ENCODE measurements at regions of chr10 and their contacts with region 1.

Region 1: GRCh38 chr10:73096449-73097304 is at the start of gene P4HA1:
- DNase-seq: peak; percentile 93 to 100 (median 97)
- ATAC-seq: peak; percentile 84
- H3K4me3 ChIP-seq: peak within 1 kb of the TSS; percentile 97
- H3K4me3 Mint-ChIP-seq: peak within 1 kb of the TSS; percentile 94
- H3K27ac ChIP-seq: peak within 1 kb of the TSS; percentile 89 to 98
- H3K27ac Mint-ChIP-seq: peak within 1 kb of the TSS; percentile 87
- H3K4me1 ChIP-seq: peaks cover 7% of the 10 kb centered on the region
- H3K4me1 Mint-ChIP-seq: peaks cover 41% of the 10 kb centered on the region
- H3K27me3 ChIP-seq: no peaks in the 10 kb centered on the region
- H3K27me3 Mint-ChIP-seq: no peaks in the 10 kb centered on the region
- CTCF ChIP-seq: peak; percentile 79
- total RNA-seq, gene P4HA1: 9.0 to 9.1 TPM

Region 2: GRCh38 chr10:73110345-73110849 is 13.7 kb after region 1 on chr10 and contains the start of gene NUDT13:
- CTCF ChIA-PET with region 1: interaction called, 28 read pairs
- POLR2A ChIA-PET with region 1: interaction called, 49 read pairs
- intact Hi-C with region 1: loop called (anchors 1 to 2 kb)
- DNase-seq: peak; percentile 9 to 83 (median 34)
- ATAC-seq: peak; percentile 91
- H3K4me3 ChIP-seq: peak within 1 kb of the TSS; percentile 46
- H3K4me3 Mint-ChIP-seq: peak within 1 kb of the TSS; percentile 89
- H3K27ac ChIP-seq: peak within 1 kb of the TSS in 1 of 2 donors; percentile 0
- H3K27ac Mint-ChIP-seq: peak within 1 kb of the TSS; percentile 71
- H3K4me1 ChIP-seq: peaks cover 6% of the 10 kb centered on the region
- H3K4me1 Mint-ChIP-seq: peaks cover 16% of the 10 kb centered on the region
- H3K27me3 ChIP-seq: no peaks in the 10 kb centered on the region
- H3K27me3 Mint-ChIP-seq: no peaks in the 10 kb centered on the region
- CTCF ChIP-seq: no peak
- total RNA-seq, gene NUDT13: 0.67 to 0.82 TPM

Region 3: DNA sequence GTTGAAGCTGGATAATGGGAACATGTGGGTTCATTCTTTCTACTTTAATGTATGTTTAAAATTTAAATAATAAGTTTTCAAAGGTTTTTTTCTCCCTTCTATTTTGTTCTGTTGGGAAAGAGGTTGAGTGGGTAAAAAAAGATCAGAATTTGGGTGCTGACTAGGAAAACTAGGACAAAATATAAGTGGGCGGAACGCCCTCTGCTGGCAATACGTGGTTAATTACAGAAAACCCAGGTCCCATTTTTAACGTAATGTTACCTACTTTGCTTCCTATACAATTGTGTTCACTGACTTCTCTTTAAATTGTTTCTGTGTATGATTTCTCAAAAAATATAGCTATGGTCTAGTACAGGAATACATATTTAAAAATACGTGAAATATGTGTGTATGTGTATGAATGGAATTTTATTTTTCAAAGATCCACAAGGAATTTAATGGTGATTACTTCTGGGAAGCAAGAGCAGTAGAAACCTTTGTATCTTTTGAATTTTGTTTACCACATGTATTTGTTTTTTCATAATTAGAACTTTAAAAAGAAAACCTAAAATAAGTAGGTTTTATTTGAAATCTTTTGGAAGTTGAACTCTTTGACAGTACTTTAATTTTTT is 62.5 kb after region 1 on chr10:
- CTCF ChIA-PET with region 1: interaction called, 25 read pairs
- POLR2A ChIA-PET with region 1: interaction called, 15 read pairs
- intact Hi-C with region 1: loop called (anchors 1 kb)
- DNase-seq: peak; percentile 35 to 78 (median 49)
- ATAC-seq: peak; percentile 76
- H3K4me3 ChIP-seq: no peak overlapping the region
- H3K4me3 Mint-ChIP-seq: no peak overlapping the region
- H3K27ac ChIP-seq: no peak overlapping the region
- H3K27ac Mint-ChIP-seq: no peak overlapping the region
- H3K4me1 ChIP-seq: peaks cover 6% of the 10 kb centered on the region
- H3K4me1 Mint-ChIP-seq: peaks cover 44% of the 10 kb centered on the region
- H3K27me3 ChIP-seq: no peaks in the 10 kb centered on the region
- H3K27me3 Mint-ChIP-seq: no peaks in the 10 kb centered on the region
- CTCF ChIP-seq: peak; percentile 93

Region 4: GRCh38 chr10:73287441-73287840 is 190.8 kb after region 1 on chr10:
- CTCF ChIA-PET with region 1: no interaction called
- POLR2A ChIA-PET with region 1: no interaction called
- intact Hi-C with region 1: no loop called
- DNase-seq: peak in 2 of 14 experiments; percentile 3 to 8
- ATAC-seq: no peak
- H3K4me3 ChIP-seq: no peak overlapping the region
- H3K4me3 Mint-ChIP-seq: no peak overlapping the region
- H3K27ac ChIP-seq: no peak overlapping the region
- H3K27ac Mint-ChIP-seq: no peak overlapping the region
- H3K4me1 ChIP-seq: no peaks in the 10 kb centered on the region
- H3K4me1 Mint-ChIP-seq: no peaks in the 10 kb centered on the region
- H3K27me3 ChIP-seq: no peaks in the 10 kb centered on the region
- H3K27me3 Mint-ChIP-seq: no peaks in the 10 kb centered on the region
- CTCF ChIP-seq: no peak

Region 5: GRCh38 chr10:73358331-73359279 is 261.9 kb after region 1 on chr10 and contains the start of gene CFAP70:
- CTCF ChIA-PET with region 1: no interaction called
- POLR2A ChIA-PET with region 1: no interaction called
- intact Hi-C with region 1: loop called in 1 of 2 experiments (anchors 5 kb)
- DNase-seq: peak; percentile 85 to 98 (median 92)
- ATAC-seq: peak; percentile 98
- H3K4me3 ChIP-seq: peak within 1 kb of the TSS; percentile 82
- H3K4me3 Mint-ChIP-seq: peak within 1 kb of the TSS; percentile 98
- H3K27ac ChIP-seq: peak within 1 kb of the TSS; percentile 75 to 83
- H3K27ac Mint-ChIP-seq: peak within 1 kb of the TSS; percentile 95
- H3K4me1 ChIP-seq: peaks cover 7% of the 10 kb centered on the region
- H3K4me1 Mint-ChIP-seq: peaks cover 24% of the 10 kb centered on the region
- H3K27me3 ChIP-seq: no peaks in the 10 kb centered on the region
- H3K27me3 Mint-ChIP-seq: no peaks in the 10 kb centered on the region
- CTCF ChIP-seq: no peak
- total RNA-seq, gene CFAP70: 2.6 TPM

Measured in CD4-positive, alpha-beta T cell (primary cell).